WTC11 (cell line): ENCODE measurements at regions of chr17 and their contacts with region 1.

Region 1: GRCh38 chr17:40362696-40363110 is 1.8 kb downstream of the GJD3 start:
- DNase-seq: peak; percentile 92
- ATAC-seq: peak; percentile 66
- H3K4me3 Mint-ChIP-seq: peak overlapping the region; percentile 58
- H3K27ac Mint-ChIP-seq: no peak overlapping the region
- H3K4me1 Mint-ChIP-seq: peaks cover 36% of the 10 kb centered on the region
- H3K27me3 Mint-ChIP-seq: peaks cover 40% of the 10 kb centered on the region
- CTCF ChIP-seq: no peak

Region 2: DNA sequence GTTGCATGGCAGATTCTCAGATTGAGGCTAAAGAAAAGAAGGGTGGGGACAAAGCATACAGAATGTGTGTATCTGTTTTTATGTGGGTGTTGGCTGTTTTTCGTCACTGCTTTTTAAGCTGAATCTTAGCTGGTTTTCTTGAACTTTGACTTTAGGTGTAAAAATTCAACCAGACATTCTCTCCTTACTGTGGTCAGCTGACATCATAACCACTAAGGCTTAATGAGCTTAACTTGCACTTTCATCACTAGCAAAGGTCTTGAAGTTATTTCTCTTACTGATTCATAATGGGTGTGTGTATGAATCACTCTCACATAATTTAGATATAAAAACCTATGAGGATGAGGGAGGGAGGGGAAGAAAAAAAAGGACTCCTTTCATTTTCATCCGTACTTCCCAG is 79.0 kb before region 1 on chr17:
- CTCF ChIA-PET with region 1: no interaction called
- POLR2A ChIA-PET with region 1: no interaction called
- DNase-seq: no peak
- ATAC-seq: no peak
- H3K4me3 Mint-ChIP-seq: no peak overlapping the region
- H3K27ac Mint-ChIP-seq: peak overlapping the region; percentile 41; the same call in 1 of the 2 replicates
- H3K4me1 Mint-ChIP-seq: peaks cover 21% of the 10 kb centered on the region
- H3K27me3 Mint-ChIP-seq: no peaks in the 10 kb centered on the region
- CTCF ChIP-seq: no peak

Region 3: GRCh38 chr17:40309031-40309948 is 53.4 kb before region 1 on chr17 and contains the start of gene RARA:
- CTCF ChIA-PET with region 1: interaction called, 17 read pairs
- POLR2A ChIA-PET with region 1: no interaction called
- DNase-seq: peak; percentile 83
- ATAC-seq: peak; percentile 77
- H3K4me3 Mint-ChIP-seq: no peak within 1 kb of the TSS
- H3K27ac Mint-ChIP-seq: no peak within 1 kb of the TSS
- H3K4me1 Mint-ChIP-seq: peaks cover 40% of the 10 kb centered on the region
- H3K27me3 Mint-ChIP-seq: no peaks in the 10 kb centered on the region
- CTCF ChIP-seq: no peak
- total RNA-seq, gene RARA: 14.3 to 20.7 TPM (median 15.8 TPM) in 3 replicates

Region 4: GRCh38 chr17:40345161-40345993 is 17.3 kb before region 1 on chr17:
- CTCF ChIA-PET with region 1: interaction called, 11 read pairs
- POLR2A ChIA-PET with region 1: no interaction called
- DNase-seq: peak; percentile 85
- ATAC-seq: peak; percentile 36
- H3K4me3 Mint-ChIP-seq: peak overlapping the region; percentile 76
- H3K27ac Mint-ChIP-seq: no peak overlapping the region
- H3K4me1 Mint-ChIP-seq: peaks cover 69% of the 10 kb centered on the region
- H3K27me3 Mint-ChIP-seq: peaks cover 59% of the 10 kb centered on the region
- CTCF ChIP-seq: no peak

Region 5: GRCh38 chr17:40417609-40418427 is 55.1 kb after region 1 on chr17 and contains the start of gene TOP2A:
- CTCF ChIA-PET with region 1: interaction called, 26 read pairs
- POLR2A ChIA-PET with region 1: no interaction called
- DNase-seq: peak; percentile 97
- ATAC-seq: peak; percentile 95
- H3K4me3 Mint-ChIP-seq: peak within 1 kb of the TSS; percentile 97
- H3K27ac Mint-ChIP-seq: peak within 1 kb of the TSS; percentile 84
- H3K4me1 Mint-ChIP-seq: peaks cover 49% of the 10 kb centered on the region
- H3K27me3 Mint-ChIP-seq: no peaks in the 10 kb centered on the region; the same call in 1 of the 2 replicates
- CTCF ChIP-seq: no peak
- total RNA-seq, gene TOP2A: 273 to 307 TPM (median 292 TPM) in 3 replicates

Region 6: GRCh38 chr17:40443583-40444327 is 81.1 kb after region 1 on chr17:
- CTCF ChIA-PET with region 1: interaction called, 38 read pairs
- POLR2A ChIA-PET with region 1: no interaction called
- DNase-seq: peak; percentile 79
- ATAC-seq: peak; percentile 32
- H3K4me3 Mint-ChIP-seq: peak overlapping the region; percentile 83
- H3K27ac Mint-ChIP-seq: no peak overlapping the region
- H3K4me1 Mint-ChIP-seq: peaks cover 44% of the 10 kb centered on the region
- H3K27me3 Mint-ChIP-seq: peaks cover 12% of the 10 kb centered on the region
- CTCF ChIP-seq: no peak

Region 7: DNA sequence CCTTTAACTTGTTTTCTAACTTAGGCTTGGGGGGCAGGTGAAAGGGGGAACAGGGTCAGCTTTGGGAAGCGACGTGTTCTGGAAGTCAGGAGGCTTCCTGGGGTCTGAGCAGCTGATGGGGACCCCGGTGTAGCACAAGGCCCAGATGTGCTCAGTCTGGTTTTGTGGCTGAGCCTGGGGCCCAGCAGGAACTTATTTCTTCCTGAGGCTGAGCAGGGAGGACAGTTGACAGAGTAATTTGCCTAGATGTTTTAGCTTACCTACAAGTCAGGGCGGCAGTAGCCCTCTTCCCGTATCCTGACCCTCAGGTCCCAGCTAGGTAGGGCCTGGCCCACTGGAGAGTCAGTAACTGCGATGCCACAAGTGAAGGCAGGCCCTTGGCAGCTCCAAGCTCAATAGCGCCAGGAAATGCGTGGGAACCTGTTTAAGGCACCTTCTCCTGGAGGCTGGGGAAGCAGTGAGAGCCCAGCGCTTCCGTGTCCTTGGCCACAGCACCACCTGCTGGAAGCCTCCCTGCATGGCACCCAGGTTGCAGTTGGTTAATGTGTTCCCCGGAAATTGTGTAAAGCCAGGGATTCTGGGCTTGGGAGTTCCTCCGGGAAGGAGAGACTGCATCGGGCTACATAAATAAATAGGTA is 197.4 kb after region 1 on chr17:
- CTCF ChIA-PET with region 1: interaction called, 82 read pairs
- POLR2A ChIA-PET with region 1: no interaction called
- DNase-seq: peak; percentile 93
- ATAC-seq: peak; percentile 83
- H3K4me3 Mint-ChIP-seq: no peak overlapping the region
- H3K27ac Mint-ChIP-seq: no peak overlapping the region
- H3K4me1 Mint-ChIP-seq: peaks cover 42% of the 10 kb centered on the region
- H3K27me3 Mint-ChIP-seq: peaks cover 5% of the 10 kb centered on the region
- CTCF ChIP-seq: peak; percentile 96